Ascending aorta (tissue), 2 donors: ENCODE measurements at regions of chr19 and their contacts with region 1.

Region 1: DNA sequence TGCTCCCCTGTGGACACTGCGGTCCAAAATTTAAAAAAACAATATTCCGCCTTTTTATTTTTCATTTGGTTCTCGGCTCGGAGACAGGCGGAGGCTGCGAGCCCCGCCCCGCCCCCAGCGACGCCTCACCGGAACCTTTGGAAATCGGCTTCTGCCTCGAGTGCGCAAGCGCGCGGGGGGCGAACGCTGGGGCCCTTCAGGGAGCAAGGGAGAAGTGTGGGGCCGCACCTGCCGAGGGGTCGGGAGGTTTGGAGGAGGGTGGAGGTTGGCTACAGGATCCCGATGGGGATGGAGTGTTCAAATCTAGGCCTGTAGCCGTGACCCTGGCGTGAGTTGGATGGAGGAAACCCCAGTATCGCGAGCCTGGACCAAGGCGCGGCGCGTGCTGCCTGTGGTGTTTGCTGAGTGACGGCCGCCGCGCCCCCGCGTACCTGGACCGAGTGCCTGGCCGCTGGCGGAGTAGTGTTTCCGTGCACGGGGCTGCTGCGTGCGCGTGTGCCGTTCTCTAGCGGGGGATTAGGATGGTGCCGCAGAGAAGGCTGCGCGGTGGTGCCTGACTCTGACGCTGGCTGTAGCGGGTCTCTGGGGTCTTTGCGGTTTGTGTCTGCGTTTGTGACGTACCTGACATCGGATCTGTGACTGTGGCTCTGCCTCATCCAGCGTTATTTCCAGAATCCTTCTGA is 565 bp upstream of the ZFP30 start:
- DNase-seq: peak; percentile 45 to 87
- H3K4me3 ChIP-seq: peak overlapping the region; percentile 72 to 85
- H3K27ac ChIP-seq: peak overlapping the region; percentile 77 to 92
- H3K4me1 ChIP-seq: peaks cover 4 to 14% of the 10 kb centered on the region in 2 donors
- H3K27me3 ChIP-seq: no peaks in the 10 kb centered on the region
- CTCF ChIP-seq: no peak

Region 2: DNA sequence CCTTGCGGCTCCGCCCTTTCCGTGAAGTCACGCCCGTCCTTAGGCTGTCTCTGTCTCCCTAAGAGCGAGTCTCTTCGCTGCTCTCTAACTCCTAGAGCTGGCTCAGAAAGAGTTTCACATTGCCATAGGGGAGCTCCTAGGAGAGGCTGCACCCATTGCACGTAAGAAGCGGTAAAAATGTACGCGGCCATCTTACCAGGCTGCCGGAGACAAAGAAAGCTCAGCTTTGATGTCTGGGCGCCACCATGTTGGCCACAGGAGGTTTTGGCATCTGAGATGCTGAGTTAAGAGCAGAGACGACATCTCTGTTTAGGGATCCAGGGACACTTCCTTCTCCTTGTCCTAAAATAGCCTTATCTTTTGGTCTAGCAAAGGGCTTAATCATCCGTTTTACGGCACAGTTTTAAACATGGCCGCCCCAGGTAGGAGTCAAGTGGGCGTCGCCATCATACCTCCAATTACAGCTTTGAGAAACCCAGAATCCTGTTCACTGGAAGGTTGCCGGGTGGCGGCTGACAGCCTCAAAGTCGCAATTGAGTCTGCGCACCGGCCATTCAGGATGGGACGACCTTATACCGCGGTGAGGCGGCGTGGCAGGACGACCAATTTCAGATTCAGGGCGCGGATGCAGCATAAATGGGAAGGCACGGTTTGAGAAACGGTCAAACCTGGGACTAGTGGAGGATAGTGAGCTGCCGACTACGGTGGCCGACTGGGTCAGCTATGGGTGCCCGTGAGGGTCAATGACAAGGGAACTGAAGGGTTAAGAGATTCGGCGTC is 149.3 kb before region 1 on chr19 and contains the start of gene ZNF793:
- intact Hi-C with region 1: loop called (anchors 5 kb)
- DNase-seq: peak; percentile 34 to 89
- H3K4me3 ChIP-seq: peak within 1 kb of the TSS; percentile 75 to 88
- H3K27ac ChIP-seq: peak within 1 kb of the TSS; percentile 82 to 98
- H3K4me1 ChIP-seq: peaks cover 0 to 4% of the 10 kb centered on the region in 2 donors
- H3K27me3 ChIP-seq: no peaks in the 10 kb centered on the region
- CTCF ChIP-seq: no peak
- total RNA-seq, gene ZNF793: 3.6 TPM

Region 3: DNA sequence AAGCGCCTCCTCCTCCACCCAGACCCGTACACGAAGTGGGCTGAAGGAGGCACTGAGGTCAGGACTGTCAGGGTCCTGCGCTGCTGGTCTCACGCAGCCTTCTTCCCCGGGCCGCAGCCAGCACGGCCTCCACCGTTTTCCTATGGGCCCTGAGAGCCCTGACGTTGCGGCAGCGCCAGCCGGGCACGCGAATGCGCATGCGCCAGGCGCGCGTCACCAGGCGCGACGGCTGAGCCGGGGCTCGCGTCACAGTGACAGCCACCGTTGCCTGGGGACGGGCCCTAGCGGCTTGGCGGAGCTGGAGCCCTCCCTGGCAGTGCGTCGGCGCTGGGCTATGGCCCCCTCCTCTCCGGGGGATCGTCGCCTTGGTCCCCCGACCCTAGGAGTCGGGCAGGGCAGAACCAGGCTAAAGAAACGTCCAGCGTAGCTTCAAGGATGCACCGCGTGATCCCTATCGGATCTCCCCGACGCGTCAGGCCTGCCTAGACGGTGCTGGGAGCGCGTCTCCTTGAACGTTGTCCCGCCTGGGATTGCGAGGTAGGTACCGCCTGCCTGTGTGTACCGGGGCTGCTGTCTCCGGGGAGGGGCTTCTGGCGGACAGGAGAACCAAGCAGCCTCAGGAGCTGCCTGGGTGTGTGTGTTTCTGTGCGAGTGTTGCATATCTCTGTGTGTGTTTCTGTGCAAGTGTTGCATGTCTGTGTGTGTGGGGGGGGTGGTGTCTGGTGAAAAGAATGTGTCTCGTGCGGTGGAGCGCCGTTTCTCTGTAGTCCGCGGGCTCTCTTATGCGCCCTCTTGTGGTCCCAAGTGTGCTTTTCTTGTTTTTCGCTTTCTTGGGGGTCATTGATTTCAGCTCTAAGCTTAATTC is 104.5 kb before region 1 on chr19:
- intact Hi-C with region 1: no loop called
- DNase-seq: no peak
- H3K4me3 ChIP-seq: peak overlapping the region in 1 of 2 donors; percentile 21
- H3K27ac ChIP-seq: no peak overlapping the region
- H3K4me1 ChIP-seq: no peaks in the 10 kb centered on the region
- H3K27me3 ChIP-seq: no peaks in the 10 kb centered on the region
- CTCF ChIP-seq: no peak

Region 4: GRCh38 chr19:37691881-37692504 is 36.2 kb after region 1 on chr19:
- intact Hi-C with region 1: loop called (anchors 5 kb)
- DNase-seq: peak; percentile 42 to 88
- H3K4me3 ChIP-seq: peak overlapping the region; percentile 66 to 90
- H3K27ac ChIP-seq: peak overlapping the region; percentile 81 to 84
- H3K4me1 ChIP-seq: peaks cover 0 to 4% of the 10 kb centered on the region in 2 donors
- H3K27me3 ChIP-seq: no peaks in the 10 kb centered on the region
- CTCF ChIP-seq: peak in 1 of 3 experiments; percentile 5